Heart left ventricle (tissue), 16 donors: ENCODE measurements at regions of chr11 and their contacts with region 1.

Region 1: GRCh38 chr11:95705485-95706124 is 84.0 kb downstream of the FAM76B start:
- DNase-seq: peak; percentile 82 to 91 (median 87)
- ATAC-seq: peak; percentile 90 to 99 (median 98)
- H3K4me3 ChIP-seq: no peak overlapping the region
- H3K27ac ChIP-seq: peak overlapping the region in 8 of 12 donors; percentile 1 to 47 (median 22)
- H3K4me1 ChIP-seq: peaks cover 0 to 30% (median 8%) of the 10 kb centered on the region in 12 donors
- H3K27me3 ChIP-seq: no peaks in the 10 kb centered on the region
- CTCF ChIP-seq: peak; percentile 88 to 99 (median 93)
- POLR2A ChIP-seq: no peak

Region 2: GRCh38 chr11:95067039-95067840 is 638.4 kb before region 1 on chr11:
- intact Hi-C with region 1: loop called in 4 of 10 experiments (anchors 5 kb)
- DNase-seq: peak; percentile 85 to 93 (median 89)
- ATAC-seq: peak; percentile 65 to 91 (median 86)
- H3K4me3 ChIP-seq: peak overlapping the region; percentile 62 to 92 (median 78)
- H3K27ac ChIP-seq: peak overlapping the region; percentile 93 to 99 (median 96)
- H3K4me1 ChIP-seq: peaks cover 3 to 24% (median 13%) of the 10 kb centered on the region in 12 donors
- H3K27me3 ChIP-seq: no peaks in the 10 kb centered on the region
- CTCF ChIP-seq: peak; percentile 35 to 83 (median 62)
- POLR2A ChIP-seq: peak in 1 of 2 donors; percentile 49

Region 3: GRCh38 chr11:95337175-95337957 is 368.2 kb before region 1 on chr11:
- intact Hi-C with region 1: loop called in 3 of 10 experiments (anchors 10 kb)
- DNase-seq: peak; percentile 61 to 78 (median 74)
- ATAC-seq: peak; percentile 45 to 85 (median 69)
- H3K4me3 ChIP-seq: peak overlapping the region in 4 of 12 donors; percentile 1 to 23 (median 12)
- H3K27ac ChIP-seq: peak overlapping the region; percentile 68 to 89 (median 80)
- H3K4me1 ChIP-seq: peaks cover 6 to 41% (median 32%) of the 10 kb centered on the region in 12 donors
- H3K27me3 ChIP-seq: no peaks in the 10 kb centered on the region
- CTCF ChIP-seq: no peak
- POLR2A ChIP-seq: no peak

Region 4: DNA sequence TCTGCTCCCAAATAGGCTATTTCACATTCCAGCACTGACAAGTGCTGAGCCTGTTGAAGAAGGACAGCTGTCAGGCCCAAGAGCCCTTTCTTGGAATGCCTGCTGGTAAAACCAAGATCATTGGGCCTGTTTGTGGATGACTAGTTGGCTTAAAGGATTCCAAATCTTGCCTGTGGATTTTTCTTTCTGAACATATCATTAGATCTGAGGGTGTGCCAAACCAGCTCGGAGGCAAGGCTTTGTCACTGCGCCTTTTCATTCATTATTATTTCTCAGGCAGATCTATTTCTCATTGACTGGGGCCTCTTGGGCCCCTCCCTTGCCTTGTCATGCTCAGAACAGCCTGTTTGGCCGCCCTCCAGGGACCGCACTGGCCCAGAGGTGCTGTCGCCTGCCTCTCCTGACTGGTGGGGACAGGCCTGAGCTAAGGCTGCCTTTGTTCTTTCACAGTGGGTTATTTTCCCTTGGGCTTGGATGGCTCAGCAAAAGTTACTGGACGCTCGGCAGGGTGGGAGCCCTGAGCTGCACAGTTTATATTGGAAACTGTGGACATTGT is 251.9 kb before region 1 on chr11:
- intact Hi-C with region 1: loop called in 1 of 10 experiments (anchors 10 kb)
- DNase-seq: peak; percentile 52 to 77 (median 71)
- ATAC-seq: peak; percentile 29 to 87 (median 71)
- H3K4me3 ChIP-seq: no peak overlapping the region
- H3K27ac ChIP-seq: peak overlapping the region in 5 of 12 donors; percentile 25 to 64 (median 50)
- H3K4me1 ChIP-seq: peaks cover 0 to 33% (median 17%) of the 10 kb centered on the region in 12 donors
- H3K27me3 ChIP-seq: no peaks in the 10 kb centered on the region
- CTCF ChIP-seq: no peak
- POLR2A ChIP-seq: no peak

Region 5: DNA sequence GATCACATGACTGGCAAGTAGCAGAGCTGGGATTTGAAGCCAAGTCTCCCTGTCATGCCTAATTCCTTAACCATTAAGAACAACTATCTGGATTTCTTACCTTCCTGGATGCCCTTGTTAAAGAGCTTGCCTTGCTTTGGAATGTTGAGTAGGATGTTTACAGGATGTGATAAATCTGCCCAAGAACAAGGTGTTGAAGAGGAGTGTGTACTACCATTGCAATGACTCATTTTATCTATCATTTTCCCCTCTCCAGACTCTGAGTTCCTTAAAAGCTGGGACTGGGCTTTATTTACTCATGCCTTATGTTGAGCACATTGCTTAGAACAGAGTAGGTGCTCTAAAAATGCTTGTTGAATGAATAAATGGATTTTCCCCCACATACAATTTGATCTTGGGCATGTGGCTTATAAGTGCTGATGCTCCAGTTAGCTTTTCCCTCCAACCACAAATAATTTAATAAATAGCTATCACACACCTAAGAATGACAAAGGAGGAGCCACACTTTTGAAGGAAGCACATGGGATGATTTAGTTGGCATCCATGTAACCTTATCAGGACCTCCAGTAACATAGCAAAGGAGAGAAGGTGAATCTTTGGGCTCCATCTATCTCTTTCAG is 206.0 kb before region 1 on chr11:
- intact Hi-C with region 1: no loop called
- DNase-seq: no peak
- ATAC-seq: no peak
- H3K4me3 ChIP-seq: no peak overlapping the region
- H3K27ac ChIP-seq: no peak overlapping the region
- H3K4me1 ChIP-seq: peaks cover 0 to 17% (median 0%) of the 10 kb centered on the region in 12 donors
- H3K27me3 ChIP-seq: no peaks in the 10 kb centered on the region
- CTCF ChIP-seq: no peak
- POLR2A ChIP-seq: no peak

Region 6: DNA sequence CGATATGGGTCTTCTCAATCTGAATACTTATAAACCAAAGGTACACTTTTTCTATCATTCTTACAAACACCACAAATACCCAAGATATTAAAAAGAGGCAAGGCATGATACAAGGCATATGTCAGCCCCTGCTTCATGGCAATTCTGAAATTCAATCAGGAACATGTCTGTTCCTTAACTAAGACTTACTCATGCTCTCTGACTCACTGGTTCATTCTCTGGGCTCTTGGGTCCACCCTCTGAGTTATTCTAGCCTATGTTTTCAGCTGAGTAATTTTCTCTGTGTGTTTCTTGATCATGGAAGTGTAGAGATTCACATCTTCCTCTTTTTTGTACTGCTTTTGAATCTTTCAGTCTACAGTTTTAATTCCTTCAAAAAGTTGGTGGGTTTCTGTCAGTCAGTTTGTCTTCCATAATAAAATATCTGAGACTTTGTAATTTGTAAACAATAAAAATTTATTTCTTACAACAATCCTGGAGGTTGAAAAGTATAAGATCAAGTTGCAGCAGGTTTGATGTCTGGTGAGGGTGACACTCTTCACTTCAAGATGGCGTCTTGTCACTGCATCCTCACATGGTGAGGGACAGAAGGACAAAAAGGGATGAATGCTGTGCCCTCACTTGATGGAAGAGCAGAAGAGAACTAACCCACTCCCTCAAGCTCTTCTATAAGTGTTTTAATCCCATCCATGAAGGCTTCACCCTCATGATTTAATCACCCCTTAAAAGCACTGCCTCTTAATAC is 127.7 kb before region 1 on chr11:
- intact Hi-C with region 1: loop called in 3 of 10 experiments (anchors 2 to 10 kb)
- DNase-seq: no peak
- ATAC-seq: peak in 2 of 4 donors; percentile 48 to 80
- H3K4me3 ChIP-seq: no peak overlapping the region
- H3K27ac ChIP-seq: no peak overlapping the region
- H3K4me1 ChIP-seq: peaks cover 0 to 25% (median 0%) of the 10 kb centered on the region in 12 donors
- H3K27me3 ChIP-seq: no peaks in the 10 kb centered on the region
- CTCF ChIP-seq: peak in 3 of 12 donors; percentile 2 to 20 (median 17)
- POLR2A ChIP-seq: no peak

Region 7: DNA sequence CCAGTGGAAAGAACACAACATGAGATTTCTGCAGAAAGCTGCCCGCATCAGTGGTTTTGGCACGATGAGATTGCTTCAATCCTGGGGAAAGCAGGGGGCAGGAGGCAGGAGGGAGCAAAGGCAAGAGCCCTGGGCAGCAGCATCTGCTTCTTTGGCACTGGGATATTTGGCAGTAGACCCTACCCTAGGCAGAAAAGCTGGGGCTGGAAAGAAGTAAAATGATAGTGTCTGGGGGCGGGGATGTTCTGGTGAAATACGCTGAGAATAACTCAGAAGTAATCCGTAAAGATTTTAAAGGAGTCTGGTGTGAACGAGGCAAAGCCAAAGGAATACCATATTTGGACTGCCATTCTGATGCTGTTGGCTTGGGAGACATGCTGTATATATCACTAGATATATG is 22.0 kb after region 1 on chr11:
- intact Hi-C with region 1: no loop called
- DNase-seq: no peak
- ATAC-seq: no peak
- H3K4me3 ChIP-seq: no peak overlapping the region
- H3K27ac ChIP-seq: no peak overlapping the region
- H3K4me1 ChIP-seq: no peaks in the 10 kb centered on the region
- H3K27me3 ChIP-seq: no peaks in the 10 kb centered on the region
- CTCF ChIP-seq: no peak
- POLR2A ChIP-seq: no peak

Region 8: DNA sequence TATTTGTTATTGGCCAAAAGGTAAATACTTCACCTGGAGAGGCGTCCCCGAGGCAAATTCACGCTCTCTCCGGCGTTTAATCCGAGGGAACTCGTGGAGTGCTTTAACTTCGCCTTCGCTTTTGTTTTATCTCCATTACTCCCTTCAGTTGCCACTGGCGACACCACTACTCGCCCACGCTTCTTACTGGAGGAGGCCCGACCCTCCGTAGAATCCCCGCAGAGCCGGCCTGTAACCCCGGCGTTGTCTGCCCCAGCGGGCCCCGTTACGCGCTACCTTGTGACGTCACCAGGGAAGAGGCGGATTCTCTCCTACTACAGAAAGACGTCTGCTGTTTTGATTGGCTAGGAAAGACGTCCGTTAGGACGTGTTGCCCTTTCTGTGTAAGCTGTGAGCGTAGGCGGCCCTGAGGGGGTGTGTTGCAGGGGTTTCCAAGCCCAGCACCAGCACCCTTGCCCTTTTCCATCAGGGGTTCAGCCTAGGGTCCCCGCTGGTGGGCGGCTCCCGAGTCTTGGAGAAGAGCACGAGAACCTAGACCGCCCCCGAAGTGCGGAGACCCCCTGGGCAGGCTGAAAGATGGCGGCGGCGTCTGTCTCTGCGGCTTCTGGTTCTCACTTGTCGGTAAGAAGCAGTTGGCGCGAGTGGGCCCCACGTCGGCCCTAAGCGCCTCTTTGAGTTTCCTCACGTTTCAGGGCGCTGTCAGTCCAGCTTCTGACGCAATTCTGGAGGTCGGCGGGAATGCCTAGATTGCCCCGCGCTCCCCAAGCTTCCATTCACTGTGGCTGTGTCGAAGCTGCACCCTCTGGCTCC is 84.7 kb after region 1 on chr11 and contains the start of gene CEP57:
- intact Hi-C with region 1: no loop called
- DNase-seq: peak; percentile 95 to 97 (median 96)
- ATAC-seq: peak; percentile 88 to 96 (median 93)
- H3K4me3 ChIP-seq: peak within 1 kb of the TSS; percentile 55 to 95 (median 83)
- H3K27ac ChIP-seq: peak within 1 kb of the TSS; percentile 93 to 99 (median 99)
- H3K4me1 ChIP-seq: peaks cover 3 to 31% (median 23%) of the 10 kb centered on the region in 12 donors
- H3K27me3 ChIP-seq: no peaks in the 10 kb centered on the region
- CTCF ChIP-seq: no peak
- POLR2A ChIP-seq: peak in 1 of 2 donors; percentile 47
- total RNA-seq, gene CEP57: 17.2 to 31.7 (median 24.3) TPM